BJ (cell line): ENCODE measurements at regions of chr11 and their contacts with region 1.

Region 1: DNA sequence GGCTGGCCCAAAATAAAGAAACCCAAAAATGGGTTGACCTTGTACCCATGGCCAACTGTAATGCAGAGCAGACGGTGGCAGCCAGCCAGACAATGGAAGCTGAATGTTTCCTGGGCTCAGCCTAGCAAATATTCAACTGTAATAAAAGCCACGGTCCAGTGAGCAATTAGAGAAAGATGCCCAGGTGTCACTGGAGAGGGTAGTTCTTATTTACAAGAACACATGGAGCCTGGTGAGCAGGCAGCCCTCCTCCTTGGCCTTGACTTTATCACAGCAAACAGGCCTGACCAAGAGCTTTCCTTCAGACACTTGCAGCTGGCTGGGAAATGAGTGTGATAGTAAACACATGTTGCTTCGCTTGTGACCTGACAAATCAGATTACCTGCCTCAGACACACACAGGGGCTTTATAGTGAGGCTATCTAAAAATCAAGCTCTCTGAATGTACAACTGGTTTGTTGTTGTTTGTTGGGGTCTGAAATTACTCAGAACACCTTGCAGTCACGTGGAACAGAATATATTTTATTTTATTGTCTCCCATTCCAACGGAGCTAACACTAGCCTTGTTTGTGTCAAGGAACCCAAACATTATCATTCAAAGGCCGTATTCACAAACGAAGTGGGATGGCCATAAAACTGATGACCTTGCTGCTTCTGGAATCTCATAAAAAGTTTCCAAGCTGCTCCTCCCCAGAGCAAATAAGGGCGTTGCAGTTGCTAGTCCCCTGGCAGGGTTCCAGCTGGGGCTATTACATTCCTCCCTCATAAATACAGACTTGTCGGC is 161.0 kb downstream of the BBOX1 start:
- DNase-seq: peak; percentile 85
- H3K4me3 ChIP-seq: no peak overlapping the region
- H3K27me3 ChIP-seq: no peaks in the 10 kb centered on the region
- CTCF ChIP-seq: no peak

Region 2: GRCh38 chr11:27183672-27184457 is 17.8 kb before region 1 on chr11:
- CTCF ChIA-PET with region 1: interaction called, 13 read pairs
- POLR2A ChIA-PET with region 1: no interaction called
- DNase-seq: no peak
- H3K4me3 ChIP-seq: no peak overlapping the region
- H3K27me3 ChIP-seq: no peaks in the 10 kb centered on the region
- CTCF ChIP-seq: peak; percentile 67

Region 3: GRCh38 chr11:27234961-27235360 is 33.3 kb after region 1 on chr11:
- CTCF ChIA-PET with region 1: no interaction called
- POLR2A ChIA-PET with region 1: no interaction called
- DNase-seq: no peak
- H3K4me3 ChIP-seq: no peak overlapping the region
- H3K27me3 ChIP-seq: no peaks in the 10 kb centered on the region
- CTCF ChIP-seq: no peak

Region 4: GRCh38 chr11:27281740-27282590 is 80.3 kb after region 1 on chr11:
- CTCF ChIA-PET with region 1: interaction called, 5 read pairs
- POLR2A ChIA-PET with region 1: interaction called, 22 read pairs
- DNase-seq: peak; percentile 99
- H3K4me3 ChIP-seq: no peak overlapping the region
- H3K27me3 ChIP-seq: no peaks in the 10 kb centered on the region
- CTCF ChIP-seq: no peak

Region 5: DNA sequence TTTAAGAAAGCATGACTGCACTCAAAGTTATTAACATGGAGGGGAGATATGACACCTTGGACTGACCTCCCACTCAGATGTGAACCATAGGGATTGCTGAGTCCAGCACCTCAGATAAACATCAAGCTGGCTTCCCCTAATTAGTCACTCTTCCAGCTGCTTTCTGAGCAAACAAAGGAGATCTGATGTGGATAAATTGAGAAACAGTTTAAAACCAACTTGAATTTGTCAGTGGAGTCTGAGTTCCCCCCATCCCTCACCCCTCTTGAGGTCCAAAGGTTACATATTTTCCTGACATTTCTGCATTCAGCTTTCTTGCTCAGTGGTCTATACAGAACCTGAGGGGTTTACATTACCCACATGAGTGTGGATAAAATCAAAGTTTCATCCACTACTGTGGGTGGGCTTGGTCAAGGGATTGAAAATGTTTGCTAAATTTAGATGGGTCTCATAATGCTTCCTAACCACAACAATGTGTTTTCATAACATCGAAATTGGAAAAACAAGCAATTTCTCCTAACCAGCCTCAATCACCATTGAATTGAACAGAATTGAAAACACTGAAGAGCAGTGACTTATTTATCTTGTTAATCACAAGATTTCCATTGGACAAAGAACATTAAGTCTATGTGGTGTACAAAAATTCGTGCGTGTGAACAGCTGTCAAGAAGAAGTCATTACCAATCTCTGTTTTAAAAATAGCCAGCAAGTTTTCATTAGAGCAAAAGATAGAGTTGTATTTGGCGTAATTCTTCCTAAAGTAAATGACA is 1198.9 kb after region 1 on chr11:
- CTCF ChIA-PET with region 1: no interaction called
- POLR2A ChIA-PET with region 1: no interaction called
- DNase-seq: no peak
- H3K4me3 ChIP-seq: no peak overlapping the region
- H3K27me3 ChIP-seq: no peaks in the 10 kb centered on the region
- CTCF ChIP-seq: no peak